Common myeloid progenitor, CD34-positive (primary cell): ENCODE measurements at regions of chr17 and their contacts with region 1.

Region 1: DNA sequence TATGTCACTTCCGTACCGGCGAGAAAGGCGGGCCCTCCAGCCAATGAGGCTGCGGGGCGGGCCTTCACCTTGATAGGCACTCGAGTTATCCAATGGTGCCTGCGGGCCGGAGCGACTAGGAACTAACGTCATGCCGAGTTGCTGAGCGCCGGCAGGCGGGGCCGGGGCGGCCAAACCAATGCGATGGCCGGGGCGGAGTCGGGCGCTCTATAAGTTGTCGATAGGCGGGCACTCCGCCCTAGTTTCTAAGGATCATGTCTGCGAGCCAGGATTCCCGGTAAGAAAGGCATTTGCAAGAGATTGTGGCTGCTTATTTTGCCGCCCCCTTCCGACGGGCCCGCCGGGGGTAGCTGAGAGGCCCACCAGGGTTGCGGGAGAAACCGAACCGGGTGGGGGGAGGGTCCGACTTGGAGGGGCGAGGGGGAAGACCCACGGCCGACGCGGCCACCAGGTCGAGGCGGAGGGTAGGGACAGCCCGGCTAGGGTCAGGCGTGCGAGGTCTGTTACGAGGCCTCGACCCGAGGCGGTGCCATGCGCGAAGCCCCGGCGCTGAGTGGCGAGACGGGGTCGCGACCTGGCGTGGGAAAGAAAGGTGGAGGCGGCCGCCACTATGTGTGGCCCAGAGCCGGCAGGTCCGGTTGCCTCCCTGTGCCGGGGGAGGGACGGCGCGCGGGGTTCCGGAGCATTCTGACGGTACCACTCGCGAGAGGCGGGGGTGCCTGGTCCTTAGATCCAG is 6.7 kb upstream of the CD68 start:
- DNase-seq: peak; percentile 99 to 100 (median 100)
- H3K4me3 ChIP-seq: peak overlapping the region; percentile 86 to 100 (median 93)
- H3K27ac ChIP-seq: peak overlapping the region; percentile 83 to 94
- H3K4me1 ChIP-seq: peaks cover 17 to 52% (median 33%) of the 10 kb centered on the region in 4 experiments
- H3K27me3 ChIP-seq: no peaks in the 10 kb centered on the region

Region 2: GRCh38 chr17:7478276-7479153 is 94.2 kb before region 1 on chr17:
- CTCF ChIA-PET with region 1: no interaction called
- POLR2A ChIA-PET with region 1: no interaction called
- DNase-seq: peak; percentile 31 to 76 (median 65)
- H3K4me3 ChIP-seq: peak overlapping the region; percentile 65 to 88 (median 79)
- H3K27ac ChIP-seq: peak overlapping the region; percentile 66 to 87
- H3K4me1 ChIP-seq: peaks cover 0 to 55% (median 51%) of the 10 kb centered on the region in 4 experiments
- H3K27me3 ChIP-seq: no peaks in the 10 kb centered on the region

Region 3: DNA sequence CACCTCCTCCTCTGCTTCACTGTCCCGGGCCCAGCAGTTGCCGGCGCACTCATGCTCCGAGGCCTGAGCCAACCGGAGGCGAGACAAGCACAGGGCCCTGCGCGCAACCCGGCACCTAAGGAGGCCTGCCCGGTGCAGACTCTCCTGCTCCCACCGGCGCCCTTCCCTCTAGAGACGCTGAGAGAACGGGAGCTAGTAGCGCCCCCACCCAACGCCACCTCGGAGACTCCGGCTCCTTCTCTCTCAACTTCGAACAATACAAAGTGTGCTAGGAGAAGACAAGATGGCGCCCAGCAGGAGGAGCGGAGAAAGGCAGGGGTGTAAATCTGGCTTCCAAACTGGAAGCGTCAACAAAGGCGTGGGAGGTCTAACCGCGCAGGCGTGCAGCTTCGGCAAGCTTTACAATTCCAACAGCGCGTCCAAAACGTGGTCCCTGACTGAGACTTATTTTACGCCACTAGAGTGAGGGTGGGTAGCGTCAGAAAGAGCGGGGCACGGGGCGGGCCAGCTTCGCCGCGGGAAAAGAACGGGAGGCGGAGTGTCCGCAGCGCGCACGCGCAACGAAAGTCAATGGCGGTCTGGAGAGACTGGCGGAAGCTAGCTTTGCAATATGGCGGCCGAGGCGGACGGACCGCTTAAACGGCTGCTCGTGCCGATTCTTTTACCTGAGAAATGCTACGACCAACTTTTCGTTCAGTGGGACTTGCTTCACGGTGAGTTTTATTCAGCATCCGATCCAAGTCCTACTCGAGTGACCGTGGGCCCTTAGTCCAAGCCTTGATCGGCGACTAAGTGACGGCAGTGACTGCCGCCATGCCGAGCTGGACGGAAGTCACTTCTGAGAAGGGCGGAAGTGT is 10.7 kb after region 1 on chr17 and contains the start of gene MPDU1:
- CTCF ChIA-PET with region 1: interaction called, 58 read pairs
- POLR2A ChIA-PET with region 1: interaction called, 40 read pairs
- DNase-seq: peak; percentile 95 to 98 (median 98)
- H3K4me3 ChIP-seq: peak within 1 kb of the TSS; percentile 56 to 98 (median 92)
- H3K27ac ChIP-seq: peak within 1 kb of the TSS; percentile 99
- H3K4me1 ChIP-seq: peaks cover 4 to 74% (median 66%) of the 10 kb centered on the region in 4 experiments
- H3K27me3 ChIP-seq: no peaks in the 10 kb centered on the region

Region 4: GRCh38 chr17:7589204-7589868 is 16.6 kb after region 1 on chr17:
- CTCF ChIA-PET with region 1: interaction called, 58 read pairs
- POLR2A ChIA-PET with region 1: interaction called, 40 read pairs
- DNase-seq: peak; percentile 77 to 87 (median 78)
- H3K4me3 ChIP-seq: peak overlapping the region in 2 of 7 experiments; percentile 28 to 40
- H3K27ac ChIP-seq: no peak overlapping the region
- H3K4me1 ChIP-seq: peaks cover 0 to 30% (median 18%) of the 10 kb centered on the region in 4 experiments
- H3K27me3 ChIP-seq: no peaks in the 10 kb centered on the region

Region 5: GRCh38 chr17:7673239-7673638 is 100.5 kb after region 1 on chr17:
- CTCF ChIA-PET with region 1: no interaction called
- POLR2A ChIA-PET with region 1: no interaction called
- DNase-seq: peak; percentile 16 to 65 (median 40)
- H3K4me3 ChIP-seq: no peak overlapping the region
- H3K27ac ChIP-seq: no peak overlapping the region
- H3K4me1 ChIP-seq: no peaks in the 10 kb centered on the region
- H3K27me3 ChIP-seq: no peaks in the 10 kb centered on the region